ENCODE measurements at regions of chr6 and their contacts with region 1.

Region 1: GRCh38 chr6:81752138-81752920 is at the start of gene TENT5A:
- DNase-seq: peak; percentile 92
- ATAC-seq: peak; percentile 74 to 78
- H3K4me3 ChIP-seq: peak within 1 kb of the TSS; percentile 81 to 99 (median 91)
- H3K27ac ChIP-seq: peak within 1 kb of the TSS; percentile 89 to 95 (median 94)
- H3K4me1 ChIP-seq: peaks cover 33 to 38% of the 10 kb centered on the region in 2 donors
- H3K27me3 ChIP-seq: no peaks in the 10 kb centered on the region
- CTCF ChIP-seq: peak in 1 of 5 experiments; percentile 33
- POLR2A ChIP-seq: peak; percentile 85
- total RNA-seq, gene TENT5A: 2.4 to 3.1 (median 2.8) TPM

Region 2: DNA sequence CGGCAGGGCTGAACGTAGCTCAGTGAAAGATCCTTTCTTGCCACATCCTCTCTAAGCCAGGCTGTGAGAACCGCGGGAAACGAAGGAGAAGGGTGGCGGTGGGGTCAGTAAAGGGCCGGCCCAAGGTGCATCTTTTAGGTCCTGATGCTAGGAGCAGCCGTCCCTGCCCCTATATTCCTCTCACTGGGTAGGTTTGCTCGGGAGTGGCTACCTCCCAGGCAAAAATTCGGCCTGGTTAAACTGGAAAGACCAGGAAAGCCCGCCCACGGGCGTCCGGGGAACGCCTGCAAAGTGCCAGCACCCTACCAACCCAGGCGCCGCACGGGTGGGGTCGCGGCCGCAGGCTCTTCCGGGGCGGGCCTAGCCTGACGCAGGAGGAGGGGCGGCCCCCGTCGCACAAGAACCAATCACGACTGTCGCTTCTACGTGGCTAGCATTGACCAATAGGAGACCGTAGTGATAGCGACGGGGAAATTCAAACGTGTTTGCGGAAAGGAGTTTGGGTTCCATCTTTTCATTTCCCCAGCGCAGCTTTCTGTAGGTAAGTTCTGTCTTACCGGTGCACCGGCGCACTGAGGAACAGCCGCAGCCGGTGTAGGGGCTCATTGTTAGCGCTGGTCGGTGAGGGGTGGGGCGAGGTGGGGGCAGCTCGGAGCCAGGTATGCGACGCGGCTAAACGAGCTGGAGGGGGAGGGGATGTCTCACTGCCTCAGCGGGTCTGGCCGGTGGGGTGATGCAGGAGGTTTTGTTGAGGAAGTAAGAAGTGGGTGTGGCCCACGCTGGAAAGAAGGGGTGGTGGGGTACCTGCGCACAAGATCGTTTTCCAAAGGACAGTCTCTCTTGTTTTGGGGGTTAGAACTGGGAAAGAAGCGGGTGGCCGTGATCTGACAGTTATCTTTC is 1747.9 kb before region 1 on chr6 and contains the start of gene TTK:
- in situ Hi-C with region 1: no loop called
- intact Hi-C with region 1: loop called (anchors 5 kb)
- DNase-seq: peak; percentile 78 to 87
- ATAC-seq: peak; percentile 98 to 100
- H3K4me3 ChIP-seq: peak within 1 kb of the TSS; percentile 69 to 71 (median 70)
- H3K27ac ChIP-seq: peak within 1 kb of the TSS; percentile 71 to 82 (median 80)
- H3K4me1 ChIP-seq: peaks cover 7 to 12% of the 10 kb centered on the region in 2 donors
- H3K27me3 ChIP-seq: no peaks in the 10 kb centered on the region
- CTCF ChIP-seq: no peak
- POLR2A ChIP-seq: peak; percentile 35 to 57
- total RNA-seq, gene TTK: 0.24 to 3.4 TPM in 2 of 4 donors, not detected in the others

Region 3: DNA sequence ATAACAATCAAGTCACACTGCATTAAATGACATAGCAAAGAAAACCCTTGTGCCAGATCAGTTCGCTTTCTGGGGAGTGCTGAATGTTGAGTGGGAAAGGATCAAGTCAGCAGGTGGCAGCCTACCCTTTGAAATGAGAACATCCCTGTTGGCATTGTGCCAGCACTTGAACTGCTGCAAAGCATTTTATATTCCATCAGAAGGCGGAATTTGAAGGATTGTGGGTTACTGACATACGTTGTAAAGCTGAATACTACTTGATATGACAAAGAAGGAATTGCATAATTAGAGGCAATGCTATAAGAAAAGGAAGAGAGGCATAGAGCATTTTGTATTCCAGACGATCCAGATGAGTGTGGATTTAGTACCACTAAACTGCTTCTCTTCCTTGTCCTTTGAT is 1619.3 kb before region 1 on chr6:
- in situ Hi-C with region 1: no loop called
- intact Hi-C with region 1: loop called (anchors 10 kb)
- DNase-seq: peak; percentile 14 to 36
- ATAC-seq: peak; percentile 58 to 60
- H3K4me3 ChIP-seq: no peak overlapping the region
- H3K27ac ChIP-seq: no peak overlapping the region
- H3K4me1 ChIP-seq: peaks cover 0 to 6% of the 10 kb centered on the region in 2 donors
- H3K27me3 ChIP-seq: no peaks in the 10 kb centered on the region
- CTCF ChIP-seq: peak in 3 of 5 experiments; percentile 38 to 53 (median 49)
- POLR2A ChIP-seq: no peak

Region 4: DNA sequence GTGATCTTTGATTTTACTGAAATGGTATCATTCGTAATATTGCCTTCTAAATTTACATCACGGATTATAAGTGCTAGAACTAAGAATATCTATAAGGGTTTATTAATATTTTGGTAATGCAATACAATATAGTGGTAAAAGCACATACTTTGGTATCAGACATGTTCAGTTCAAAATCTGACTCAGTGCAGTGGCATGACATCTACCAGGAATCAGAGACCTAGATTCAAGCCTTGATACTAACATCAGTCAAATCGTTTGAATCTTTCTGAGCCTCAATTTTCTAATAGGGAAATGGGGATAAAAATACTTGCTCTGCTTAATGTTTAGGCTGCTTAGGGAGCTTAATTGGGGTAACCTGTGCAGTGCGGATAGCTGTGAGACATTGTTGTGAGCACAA is 1157.9 kb before region 1 on chr6:
- in situ Hi-C with region 1: no loop called
- intact Hi-C with region 1: no loop called
- DNase-seq: no peak
- ATAC-seq: no peak
- H3K4me3 ChIP-seq: no peak overlapping the region
- H3K27ac ChIP-seq: no peak overlapping the region
- H3K4me1 ChIP-seq: no peaks in the 10 kb centered on the region
- H3K27me3 ChIP-seq: no peaks in the 10 kb centered on the region
- CTCF ChIP-seq: no peak
- POLR2A ChIP-seq: no peak

Region 5: DNA sequence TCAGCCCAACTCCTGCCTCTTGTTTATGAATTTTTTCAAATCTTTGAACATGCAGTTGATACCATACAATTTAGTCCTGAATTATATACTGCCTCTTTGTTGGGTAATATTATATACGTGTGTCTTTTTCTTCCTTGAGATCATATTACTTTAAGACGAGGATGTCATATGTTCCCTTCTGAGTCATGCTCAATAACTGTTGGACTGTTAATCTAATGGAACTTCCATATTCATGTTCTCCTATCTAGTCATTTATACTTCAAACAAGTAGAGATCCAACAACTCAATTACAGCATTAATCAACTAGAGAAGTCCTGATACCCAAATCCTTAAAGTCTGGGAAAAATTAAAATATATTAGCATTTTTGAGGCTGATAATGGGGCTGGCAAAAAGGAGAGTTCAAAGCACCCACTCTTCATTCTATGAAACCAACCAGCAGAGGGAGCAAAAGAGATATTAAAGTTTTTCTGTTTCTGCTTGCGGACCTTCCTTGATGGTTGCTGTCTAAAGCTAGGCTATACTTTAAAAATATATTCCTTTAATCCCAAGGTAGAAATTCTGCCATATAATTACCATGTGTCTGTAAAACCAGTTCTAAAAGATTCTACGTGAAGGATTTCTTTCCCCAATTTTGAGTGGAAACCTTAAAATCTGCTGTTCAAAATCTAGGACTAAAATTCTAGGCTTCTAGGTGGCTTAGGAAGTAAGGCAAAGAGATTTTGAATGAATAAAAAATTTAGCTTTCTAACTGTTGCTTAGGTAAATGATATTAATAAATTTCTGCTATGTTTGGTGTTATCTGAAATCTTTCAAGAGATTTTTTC is 1147.0 kb before region 1 on chr6:
- in situ Hi-C with region 1: loop called (anchors 10 to 25 kb)
- intact Hi-C with region 1: loop called (anchors 1 kb)
- DNase-seq: no peak
- ATAC-seq: peak in 1 of 2 donors; percentile 42
- H3K4me3 ChIP-seq: no peak overlapping the region
- H3K27ac ChIP-seq: no peak overlapping the region
- H3K4me1 ChIP-seq: peaks cover 14 to 17% of the 10 kb centered on the region in 2 donors
- H3K27me3 ChIP-seq: no peaks in the 10 kb centered on the region
- CTCF ChIP-seq: peak; percentile 17 to 62 (median 35)
- POLR2A ChIP-seq: no peak

Region 6: DNA sequence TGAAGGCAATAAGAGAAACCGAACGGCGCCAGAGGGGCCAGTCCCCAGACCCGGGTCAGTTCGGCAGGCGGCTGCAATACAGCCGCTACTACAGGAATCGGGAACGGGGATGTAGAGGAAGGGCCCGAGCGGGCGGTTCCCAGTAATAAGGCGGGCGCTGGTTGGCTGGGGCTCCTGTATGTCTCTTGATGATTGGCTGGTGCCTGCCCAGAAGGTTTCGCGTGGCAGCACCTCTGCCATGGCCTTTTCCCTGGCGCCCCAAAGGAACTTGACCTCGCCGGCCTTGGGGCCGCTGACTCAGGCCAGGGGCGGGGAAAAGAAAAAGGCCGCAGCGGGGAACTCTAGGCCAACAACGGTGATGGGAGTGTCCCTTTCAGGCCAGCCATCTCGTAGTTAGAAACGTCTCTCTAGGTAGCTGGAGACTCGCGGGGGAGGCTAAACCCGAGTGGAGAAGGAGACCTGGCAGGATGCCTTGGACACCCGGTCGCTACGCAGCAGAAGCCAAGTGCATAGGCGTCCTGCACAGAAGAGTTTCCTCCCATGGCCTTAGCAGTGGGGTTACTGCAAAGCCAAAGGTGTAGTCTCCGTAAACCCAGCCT is 495.4 kb after region 1 on chr6 and contains the start of gene IBTK:
- in situ Hi-C with region 1: no loop called
- intact Hi-C with region 1: loop called (anchors 5 kb)
- DNase-seq: peak; percentile 94 to 97
- ATAC-seq: peak; percentile 92 to 95
- H3K4me3 ChIP-seq: peak within 1 kb of the TSS; percentile 79 to 98 (median 86)
- H3K27ac ChIP-seq: peak within 1 kb of the TSS; percentile 89 to 98 (median 92)
- H3K4me1 ChIP-seq: peaks cover 31 to 44% of the 10 kb centered on the region in 2 donors
- H3K27me3 ChIP-seq: no peaks in the 10 kb centered on the region
- CTCF ChIP-seq: no peak
- POLR2A ChIP-seq: peak; percentile 71 to 76
- total RNA-seq, gene IBTK: 26.2 to 31.7 (median 29.5) TPM